Right ventricle myocardium inferior (tissue), 1 donor: ENCODE measurements at regions of chr1 and their contacts with region 1.

Region 1: GRCh38 chr1:90850898-90851710 is 134.0 kb upstream of the BARHL2 start:
- DNase-seq: peak; percentile 91
- ATAC-seq: peak; percentile 99

Region 2: DNA sequence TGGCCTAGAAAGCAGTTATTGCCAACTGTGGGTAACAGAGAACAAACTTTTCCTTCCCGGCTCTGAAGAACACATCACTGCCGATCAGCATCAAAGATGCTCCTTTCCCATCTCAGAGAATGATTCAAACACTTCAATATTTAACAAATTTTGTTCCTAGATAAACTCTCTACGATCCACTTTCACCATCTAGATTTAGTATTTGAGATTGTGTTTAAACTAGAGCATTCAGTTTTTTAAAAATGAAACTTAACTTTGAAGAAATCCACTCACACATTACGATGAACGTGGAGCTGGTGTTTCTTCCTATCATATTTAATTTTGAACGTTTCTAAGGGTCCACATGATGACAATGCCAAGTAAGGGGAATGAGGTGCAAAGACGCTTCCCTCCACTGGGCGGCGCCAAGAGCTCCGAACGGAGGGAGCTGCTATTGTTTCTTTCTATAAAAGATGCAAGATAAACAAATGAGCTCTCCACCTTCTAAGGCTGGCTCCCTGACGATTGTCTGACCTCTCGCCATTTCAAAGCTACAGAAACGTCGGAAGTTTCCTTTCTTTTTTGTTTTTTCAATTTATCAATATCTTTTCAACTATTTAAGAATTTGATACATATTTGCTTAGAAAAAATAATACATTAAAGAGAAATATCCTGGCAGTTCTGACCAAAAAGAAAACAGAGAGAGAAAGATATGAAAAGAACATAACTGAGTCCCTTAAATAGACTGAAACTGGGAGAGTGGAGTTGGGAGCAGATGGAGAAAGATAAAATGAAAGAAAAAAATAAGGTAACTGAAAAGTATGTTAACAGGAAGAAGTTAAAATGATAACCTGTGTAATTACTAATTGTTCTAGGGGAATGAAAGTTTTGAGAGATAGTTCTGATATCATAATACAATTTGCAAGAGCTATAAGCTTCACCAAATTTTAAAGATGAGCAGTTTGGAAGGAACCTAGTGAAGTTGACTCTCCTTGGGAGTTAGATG is 129.6 kb before region 1 on chr1:
- intact Hi-C with region 1: loop called (anchors 5 kb)
- DNase-seq: no peak
- ATAC-seq: no peak

Region 3: GRCh38 chr1:91021686-91022517 is 170.8 kb after region 1 on chr1 and contains the start of gene ZNF644:
- intact Hi-C with region 1: loop called (anchors 5 kb)
- DNase-seq: peak; percentile 94
- ATAC-seq: peak; percentile 97
- total RNA-seq, gene ZNF644: 27.7 TPM

Region 4: GRCh38 chr1:91476533-91477217 is 625.6 kb after region 1 on chr1:
- intact Hi-C with region 1: no loop called
- DNase-seq: no peak
- ATAC-seq: peak; percentile 75